ENCODE measurements at regions of chr9 and their contacts with region 1.

Region 1: GRCh38 chr9:123929870-123930831 is at the start of gene DENND1A:
- DNase-seq: peak; percentile 91 to 93
- H3K4me3 ChIP-seq: peak within 1 kb of the TSS; percentile 62 to 64
- H3K27ac ChIP-seq: peak within 1 kb of the TSS; percentile 61
- H3K4me1 ChIP-seq: peaks cover 0 to 20% (median 13%) of the 10 kb centered on the region in 4 donors
- H3K27me3 ChIP-seq: peaks cover 0 to 5% of the 10 kb centered on the region in 2 donors
- CTCF ChIP-seq: no peak

Region 2: DNA sequence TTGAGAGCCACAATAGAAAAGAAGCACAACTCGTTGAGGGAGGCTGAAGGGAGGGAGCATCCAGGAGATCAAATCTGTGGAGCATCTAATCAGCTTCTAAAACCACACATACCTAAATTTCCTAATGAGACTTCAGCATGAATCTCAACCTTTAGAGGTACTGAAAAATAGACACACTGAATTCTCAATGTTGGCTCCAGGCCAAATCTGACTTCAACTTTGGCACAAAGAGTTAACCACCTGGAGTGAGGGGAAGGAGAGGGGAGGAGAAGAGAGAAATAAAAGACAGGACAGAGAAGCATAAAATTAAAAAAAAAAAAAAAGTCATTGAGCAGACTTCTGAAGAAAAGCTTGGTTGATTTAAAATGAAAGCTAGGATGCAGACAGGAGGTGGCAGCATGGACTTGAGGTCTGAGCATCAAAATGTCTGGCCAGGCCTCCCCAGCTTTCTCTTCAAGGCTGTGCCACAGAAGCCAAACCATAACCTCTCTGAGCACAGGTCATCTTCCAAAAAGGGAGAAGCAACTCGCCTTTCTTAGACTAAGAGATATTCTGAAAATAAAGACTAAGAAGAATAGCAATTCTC is 205.8 kb before region 1 on chr9:
- intact Hi-C with region 1: loop called (anchors 10 kb)
- DNase-seq: no peak
- H3K4me3 ChIP-seq: no peak overlapping the region
- H3K27ac ChIP-seq: no peak overlapping the region
- H3K4me1 ChIP-seq: no peaks in the 10 kb centered on the region
- H3K27me3 ChIP-seq: no peaks in the 10 kb centered on the region
- CTCF ChIP-seq: peak; percentile 29 to 40

Region 3: GRCh38 chr9:123851851-123852250 is 78.3 kb before region 1 on chr9:
- intact Hi-C with region 1: no loop called
- DNase-seq: no peak
- H3K4me3 ChIP-seq: no peak overlapping the region
- H3K27ac ChIP-seq: no peak overlapping the region
- H3K4me1 ChIP-seq: no peaks in the 10 kb centered on the region
- H3K27me3 ChIP-seq: no peaks in the 10 kb centered on the region
- CTCF ChIP-seq: no peak

Region 4: DNA sequence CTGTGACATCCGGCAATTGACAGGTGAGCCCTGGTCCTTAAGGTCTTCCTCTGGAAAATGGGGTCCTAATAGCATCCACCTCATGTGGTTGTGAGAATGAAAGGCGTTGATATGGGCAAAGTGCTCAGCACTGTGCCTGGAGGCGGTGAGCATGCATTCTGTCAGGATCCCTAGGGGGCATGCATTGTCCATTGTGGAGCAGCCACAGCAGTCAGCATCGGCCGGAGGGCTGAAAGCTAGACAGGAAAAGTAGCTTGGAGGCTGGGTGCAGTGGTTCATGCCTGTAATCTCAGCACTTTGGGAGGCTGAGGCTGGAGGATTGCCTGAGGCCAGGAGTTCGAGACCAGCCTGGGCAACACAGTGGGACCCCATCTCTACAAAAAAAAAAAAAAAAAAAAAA is 203.6 kb after region 1 on chr9:
- intact Hi-C with region 1: no loop called
- DNase-seq: peak; percentile 47 to 73
- H3K4me3 ChIP-seq: no peak overlapping the region
- H3K27ac ChIP-seq: no peak overlapping the region
- H3K4me1 ChIP-seq: peaks cover 0 to 13% (median 8%) of the 10 kb centered on the region in 4 donors
- H3K27me3 ChIP-seq: peaks cover 0 to 21% of the 10 kb centered on the region in 2 donors
- CTCF ChIP-seq: no peak